MCF 10A (cell line): ENCODE measurements at regions of chr22 and their contacts with region 1.

Region 1: GRCh38 chr22:26461188-26461810 is 22.3 kb downstream of the HPS4 start:
- DNase-seq: peak; percentile 61
- H3K4me3 Mint-ChIP-seq: no peak overlapping the region
- H3K27ac Mint-ChIP-seq: no peak overlapping the region
- H3K4me1 Mint-ChIP-seq: peaks cover 7% of the 10 kb centered on the region
- H3K27me3 Mint-ChIP-seq: no peaks in the 10 kb centered on the region
- CTCF ChIP-seq: peak; percentile 68

Region 2: GRCh38 chr22:26391623-26392022 is 69.7 kb before region 1 on chr22:
- CTCF ChIA-PET with region 1: interaction called, 172 read pairs
- POLR2A ChIA-PET with region 1: no interaction called
- intact Hi-C with region 1: no loop called
- DNase-seq: no peak
- H3K4me3 Mint-ChIP-seq: no peak overlapping the region
- H3K27ac Mint-ChIP-seq: no peak overlapping the region
- H3K4me1 Mint-ChIP-seq: no peaks in the 10 kb centered on the region
- H3K27me3 Mint-ChIP-seq: peaks cover 46% of the 10 kb centered on the region
- CTCF ChIP-seq: no peak

Region 3: GRCh38 chr22:26404851-26405421 is 56.4 kb before region 1 on chr22:
- CTCF ChIA-PET with region 1: interaction called, 172 read pairs
- POLR2A ChIA-PET with region 1: interaction called, 3 read pairs
- intact Hi-C with region 1: no loop called
- DNase-seq: no peak
- H3K4me3 Mint-ChIP-seq: no peak overlapping the region
- H3K27ac Mint-ChIP-seq: no peak overlapping the region
- H3K4me1 Mint-ChIP-seq: no peaks in the 10 kb centered on the region
- H3K27me3 Mint-ChIP-seq: no peaks in the 10 kb centered on the region
- CTCF ChIP-seq: no peak

Region 4: GRCh38 chr22:26428515-26429457 is 32.5 kb before region 1 on chr22 and contains the start of gene ASPHD2:
- CTCF ChIA-PET with region 1: interaction called, 13 read pairs
- POLR2A ChIA-PET with region 1: no interaction called
- intact Hi-C with region 1: no loop called
- DNase-seq: peak; percentile 39
- H3K4me3 Mint-ChIP-seq: peak within 1 kb of the TSS; percentile 96
- H3K27ac Mint-ChIP-seq: peak within 1 kb of the TSS; percentile 84
- H3K4me1 Mint-ChIP-seq: peaks cover 15% of the 10 kb centered on the region
- H3K27me3 Mint-ChIP-seq: peaks cover 19% of the 10 kb centered on the region
- CTCF ChIP-seq: no peak
- total RNA-seq, gene ASPHD2: 4.0 and 4.8 TPM in 2 replicates

Region 5: DNA sequence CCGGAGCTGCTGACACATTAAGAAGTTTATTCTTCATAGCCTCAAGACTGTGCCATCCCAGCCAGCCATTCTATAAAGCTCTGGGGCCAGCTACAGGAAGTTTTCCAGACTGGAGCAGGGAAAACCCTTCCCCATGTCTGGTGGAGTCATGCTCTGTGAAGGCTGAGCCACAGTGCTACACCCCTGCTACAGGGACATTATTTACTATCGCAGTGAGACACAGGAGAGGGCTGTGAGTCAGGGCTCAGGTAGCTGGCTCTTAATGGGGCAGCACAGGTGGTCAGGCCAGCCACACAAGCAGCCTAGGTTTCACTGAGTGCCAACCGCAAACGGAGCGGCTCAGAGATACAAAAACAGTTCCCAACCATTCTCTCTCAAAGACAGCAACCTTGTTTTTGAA is 10.2 kb after region 1 on chr22:
- CTCF ChIA-PET with region 1: interaction called, 19 read pairs
- POLR2A ChIA-PET with region 1: interaction called, 5 read pairs
- intact Hi-C with region 1: no loop called
- DNase-seq: peak; percentile 80
- H3K4me3 Mint-ChIP-seq: peak overlapping the region; percentile 14
- H3K27ac Mint-ChIP-seq: peak overlapping the region; percentile 74
- H3K4me1 Mint-ChIP-seq: peaks cover 26% of the 10 kb centered on the region
- H3K27me3 Mint-ChIP-seq: no peaks in the 10 kb centered on the region
- CTCF ChIP-seq: no peak